Body of pancreas (tissue), 4 donors: ENCODE measurements at regions of chr1 and their contacts with region 1.

Region 1: DNA sequence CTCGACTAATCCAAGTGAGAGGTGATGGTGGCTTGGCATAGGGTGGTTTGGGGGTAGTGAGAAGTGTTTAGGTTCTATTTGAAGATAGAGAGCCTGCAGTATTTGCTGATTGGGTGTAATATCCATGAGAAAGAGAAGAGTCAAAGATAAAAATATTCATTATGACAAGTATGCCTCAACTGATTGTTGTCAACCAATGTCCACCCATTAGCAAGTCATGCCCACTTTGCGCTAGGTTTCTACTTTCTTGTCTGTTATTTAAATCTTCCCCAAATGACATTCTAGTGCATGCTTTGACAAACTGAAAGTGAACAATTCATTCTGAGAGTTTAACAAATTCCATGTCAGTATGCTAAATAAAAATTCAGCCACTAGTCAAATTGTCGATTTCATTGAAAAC is 3.8 kb upstream of the XCL1 start:
- DNase-seq: no peak
- ATAC-seq: no peak
- H3K4me3 ChIP-seq: no peak overlapping the region
- H3K27ac ChIP-seq: no peak overlapping the region
- H3K4me1 ChIP-seq: no peaks in the 10 kb centered on the region
- H3K27me3 ChIP-seq: no peaks in the 10 kb centered on the region
- CTCF ChIP-seq: no peak
- POLR2A ChIP-seq: no peak

Region 2: DNA sequence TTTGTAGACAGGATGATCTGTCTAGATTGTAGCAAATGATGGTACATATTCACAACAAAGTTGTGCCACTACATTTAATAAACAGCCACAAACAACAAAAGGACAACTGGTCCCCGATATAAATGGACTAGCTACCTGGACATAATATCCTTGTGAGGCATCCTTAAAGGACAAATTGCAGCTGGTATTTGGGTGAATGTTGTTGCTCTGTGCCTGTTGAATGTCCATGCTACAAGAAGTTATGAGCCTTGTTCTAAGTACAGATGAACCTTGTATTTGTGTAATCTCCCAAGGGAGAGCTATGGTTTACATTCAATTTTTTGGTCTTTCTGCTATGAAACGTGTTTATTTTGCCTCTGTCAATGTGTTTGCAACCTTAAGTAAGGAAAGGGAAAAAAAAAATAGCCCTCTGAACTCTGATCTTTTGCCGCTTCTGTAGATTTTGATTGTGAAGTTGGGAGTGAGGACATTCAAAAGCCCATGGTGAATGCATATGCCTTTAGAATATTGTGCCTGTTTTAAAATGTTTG is 320.4 kb before region 1 on chr1:
- intact Hi-C with region 1: no loop called
- DNase-seq: no peak
- ATAC-seq: no peak
- H3K4me3 ChIP-seq: no peak overlapping the region
- H3K27ac ChIP-seq: no peak overlapping the region
- H3K4me1 ChIP-seq: no peaks in the 10 kb centered on the region
- H3K27me3 ChIP-seq: no peaks in the 10 kb centered on the region
- CTCF ChIP-seq: no peak
- POLR2A ChIP-seq: no peak

Region 3: DNA sequence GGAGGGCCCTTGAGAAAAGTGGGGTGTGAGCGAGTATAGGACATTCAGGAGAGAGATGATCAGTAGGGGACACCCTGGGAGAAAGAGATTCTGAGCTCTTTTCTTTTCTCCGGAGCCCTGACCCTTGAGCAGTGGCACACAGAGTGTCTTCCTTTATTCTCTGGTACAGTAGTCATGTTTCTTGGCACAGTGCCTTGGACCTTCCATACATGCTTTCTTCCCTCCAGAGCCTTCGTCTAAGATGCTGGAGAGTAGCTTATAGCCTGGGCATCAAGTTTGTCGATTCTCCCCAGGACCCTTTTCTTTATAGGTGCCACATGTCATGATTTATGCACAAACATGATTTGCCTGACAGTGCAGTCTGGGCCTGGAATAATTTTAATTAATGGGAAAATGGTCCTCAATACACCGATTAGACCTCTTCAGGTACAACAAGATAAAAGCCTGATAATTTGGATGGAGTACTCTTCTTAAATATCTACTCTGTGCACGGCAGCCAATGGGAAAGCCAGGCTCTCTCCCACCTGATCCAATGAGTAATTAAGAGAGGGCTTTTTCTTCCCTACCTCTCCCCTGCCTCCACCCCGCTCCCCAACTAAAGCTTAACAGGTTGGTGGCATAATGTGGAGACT is 292.2 kb before region 1 on chr1 and contains the start of gene TBX19:
- intact Hi-C with region 1: no loop called
- DNase-seq: no peak
- ATAC-seq: no peak
- H3K4me3 ChIP-seq: no peak within 1 kb of the TSS
- H3K27ac ChIP-seq: no peak within 1 kb of the TSS
- H3K4me1 ChIP-seq: peaks cover 8% of the 10 kb centered on the region
- H3K27me3 ChIP-seq: no peaks in the 10 kb centered on the region
- CTCF ChIP-seq: no peak
- POLR2A ChIP-seq: no peak
- total RNA-seq, gene TBX19: 0.78 to 2.0 TPM

Region 4: DNA sequence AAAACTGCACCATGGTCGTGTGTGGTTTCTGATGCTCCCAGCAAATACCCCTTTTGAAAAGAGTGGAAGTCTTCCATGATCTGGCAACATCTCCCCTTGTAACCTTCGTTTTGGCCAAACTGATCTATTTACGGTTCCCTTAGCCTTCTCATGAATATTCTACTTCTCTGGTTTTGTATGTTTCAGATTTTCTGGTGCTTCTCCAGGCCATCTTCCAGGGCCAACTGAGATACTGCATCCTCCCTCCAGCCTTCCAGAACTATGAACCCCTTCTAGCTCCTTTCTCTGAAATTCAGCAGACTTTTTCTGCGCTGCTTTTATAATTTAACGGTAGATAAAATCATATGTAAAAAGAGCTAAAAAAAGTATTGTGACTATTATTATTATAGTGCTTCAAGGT is 126.6 kb before region 1 on chr1:
- intact Hi-C with region 1: loop called (anchors 5 kb)
- DNase-seq: no peak
- ATAC-seq: no peak
- H3K4me3 ChIP-seq: no peak overlapping the region
- H3K27ac ChIP-seq: no peak overlapping the region
- H3K4me1 ChIP-seq: no peaks in the 10 kb centered on the region
- H3K27me3 ChIP-seq: no peaks in the 10 kb centered on the region
- CTCF ChIP-seq: no peak
- POLR2A ChIP-seq: no peak